ENCODE measurements at regions of chr3 and their contacts with region 1.

Region 1: DNA sequence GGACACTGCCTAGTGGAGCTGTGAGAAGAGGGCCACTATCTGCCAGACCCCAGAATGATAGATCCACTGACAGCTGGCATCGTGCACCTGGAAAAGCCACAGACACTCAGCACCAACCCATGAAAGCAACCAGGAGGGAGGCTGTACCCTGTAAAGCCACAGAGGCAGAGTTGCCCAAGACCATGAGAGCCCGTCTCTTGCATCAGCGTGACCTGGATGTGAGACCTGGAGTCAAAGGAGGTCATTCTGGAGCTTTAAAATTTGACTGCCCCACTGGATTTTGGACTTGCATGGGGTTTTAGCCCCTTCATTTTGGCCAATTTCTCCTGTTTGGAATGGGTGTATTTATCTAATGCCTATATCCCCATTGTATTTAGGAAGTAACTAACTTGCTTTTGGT is 83.5 kb upstream of the P3H2 start:
- DNase-seq: no peak
- H3K4me3 ChIP-seq: no peak overlapping the region
- CTCF ChIP-seq: no peak
- POLR2A ChIP-seq: no peak

Region 2: DNA sequence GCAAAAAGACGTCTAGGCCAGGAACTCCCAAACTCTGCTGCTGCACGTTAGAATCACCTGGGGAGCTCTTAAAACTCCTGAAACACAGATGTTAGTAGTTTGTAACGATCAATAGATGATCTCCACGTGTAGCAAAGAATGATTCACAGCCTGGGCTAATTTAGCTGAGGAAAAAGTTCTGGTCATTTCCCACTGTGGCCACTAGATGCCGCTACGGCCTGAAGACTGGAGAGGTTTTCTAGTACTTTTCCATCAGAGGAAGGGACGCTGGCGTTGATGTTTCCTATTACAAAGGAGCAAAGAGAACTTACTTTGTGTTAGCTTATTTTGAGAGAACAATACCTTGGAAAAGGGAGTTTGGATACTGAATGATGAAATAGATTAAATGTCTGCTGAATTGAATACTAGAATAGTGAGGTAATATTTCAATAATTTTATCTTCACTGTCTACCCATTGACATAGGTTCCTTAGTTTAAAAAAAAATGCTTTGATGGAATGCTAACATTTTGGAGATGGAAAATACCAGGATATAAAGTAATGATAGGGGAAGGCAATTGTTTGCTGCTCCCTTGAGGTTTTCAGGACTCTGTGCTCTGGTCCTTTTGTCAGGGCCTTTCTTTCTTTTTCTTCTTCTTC is 242.6 kb before region 1 on chr3:
- intact Hi-C with region 1: loop called (anchors 5 kb)
- DNase-seq: peak; percentile 79 to 92
- H3K4me3 ChIP-seq: no peak overlapping the region
- CTCF ChIP-seq: peak in 1 of 3 donors; percentile 88
- POLR2A ChIP-seq: no peak

Region 3: DNA sequence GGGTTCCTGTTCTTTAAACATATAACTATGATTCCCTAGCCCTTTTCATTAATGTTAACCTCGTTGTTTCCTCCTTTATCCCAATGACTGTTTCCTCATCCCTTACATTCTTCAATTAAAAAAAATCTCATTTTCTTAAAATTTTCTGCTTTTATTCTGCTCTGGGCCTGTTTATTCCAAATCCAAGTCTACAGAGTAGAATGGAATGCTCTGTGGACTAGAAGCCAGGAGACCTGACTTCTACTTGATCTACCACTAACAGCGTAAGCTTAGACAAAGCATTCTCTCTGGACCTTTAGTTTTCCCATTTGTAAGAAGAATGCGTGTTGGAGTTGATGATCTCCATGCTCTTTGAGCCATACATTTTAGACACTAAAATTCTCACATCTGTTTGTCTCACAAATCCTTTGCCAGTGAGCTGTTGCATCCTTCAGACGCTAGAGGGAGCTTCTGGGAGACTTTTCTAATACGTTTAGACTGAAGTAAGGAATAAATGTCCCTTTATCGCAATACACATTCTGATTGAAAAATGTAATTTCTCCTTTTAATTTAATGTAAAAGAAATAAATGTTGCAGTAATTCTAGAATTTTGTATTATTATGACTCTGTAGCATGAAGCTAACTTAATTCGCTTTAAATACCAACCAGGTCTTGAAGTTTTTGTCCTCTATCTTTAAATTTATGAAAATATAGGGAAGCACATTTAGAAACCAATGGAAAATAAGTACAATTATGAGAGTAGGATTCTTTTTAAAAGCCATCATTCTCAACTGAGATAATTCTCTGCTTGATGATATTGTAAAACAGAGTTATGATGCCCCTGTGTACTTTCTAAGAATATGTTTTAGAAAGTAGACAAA is 680.0 kb after region 1 on chr3:
- intact Hi-C with region 1: no loop called
- DNase-seq: peak in 1 of 2 donors; percentile 28
- H3K4me3 ChIP-seq: no peak overlapping the region
- CTCF ChIP-seq: no peak
- POLR2A ChIP-seq: no peak

Measured in lower leg skin (tissue), 4 donors.